ENCODE measurements at regions of chr18 and their contacts with region 1.

Region 1: GRCh38 chr18:67310826-67311225 is 205.7 kb downstream of the DSEL start:
- DNase-seq: no peak
- H3K4me3 ChIP-seq: no peak overlapping the region
- H3K27ac ChIP-seq: no peak overlapping the region
- H3K4me1 ChIP-seq: no peaks in the 10 kb centered on the region
- H3K27me3 ChIP-seq: no peaks in the 10 kb centered on the region
- CTCF ChIP-seq: no peak
- EP300 ChIP-seq: no peak
- POLR2A ChIP-seq: no peak

Region 2: DNA sequence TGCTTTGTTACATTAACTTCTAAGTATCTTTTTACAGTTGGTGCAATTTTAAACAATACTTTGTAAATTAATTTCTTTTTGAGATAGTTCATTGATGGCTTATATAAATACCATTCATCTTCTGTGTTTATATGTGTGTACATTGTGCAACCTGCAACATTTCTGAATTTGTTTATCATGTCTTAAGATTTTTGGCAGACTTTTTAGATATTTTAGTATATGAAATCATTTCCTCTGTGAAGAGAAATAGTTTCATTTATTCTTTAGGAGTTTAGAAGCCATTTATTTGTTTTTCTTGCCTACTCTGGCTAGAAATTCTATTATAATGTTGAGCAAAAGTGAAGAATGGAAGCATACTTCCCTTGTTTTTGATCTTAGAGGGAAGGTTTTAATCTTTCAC is 543.5 kb after region 1 on chr18:
- intact Hi-C with region 1: loop called in 1 of 4 experiments (anchors 10 kb)
- DNase-seq: no peak
- H3K4me3 ChIP-seq: no peak overlapping the region
- H3K27ac ChIP-seq: no peak overlapping the region
- H3K4me1 ChIP-seq: no peaks in the 10 kb centered on the region
- H3K27me3 ChIP-seq: no peaks in the 10 kb centered on the region
- CTCF ChIP-seq: no peak
- EP300 ChIP-seq: no peak
- POLR2A ChIP-seq: no peak

Measured in ovary (tissue), 10 donors.